ENCODE measurements at regions of chr15 and their contacts with region 1.

Region 1: DNA sequence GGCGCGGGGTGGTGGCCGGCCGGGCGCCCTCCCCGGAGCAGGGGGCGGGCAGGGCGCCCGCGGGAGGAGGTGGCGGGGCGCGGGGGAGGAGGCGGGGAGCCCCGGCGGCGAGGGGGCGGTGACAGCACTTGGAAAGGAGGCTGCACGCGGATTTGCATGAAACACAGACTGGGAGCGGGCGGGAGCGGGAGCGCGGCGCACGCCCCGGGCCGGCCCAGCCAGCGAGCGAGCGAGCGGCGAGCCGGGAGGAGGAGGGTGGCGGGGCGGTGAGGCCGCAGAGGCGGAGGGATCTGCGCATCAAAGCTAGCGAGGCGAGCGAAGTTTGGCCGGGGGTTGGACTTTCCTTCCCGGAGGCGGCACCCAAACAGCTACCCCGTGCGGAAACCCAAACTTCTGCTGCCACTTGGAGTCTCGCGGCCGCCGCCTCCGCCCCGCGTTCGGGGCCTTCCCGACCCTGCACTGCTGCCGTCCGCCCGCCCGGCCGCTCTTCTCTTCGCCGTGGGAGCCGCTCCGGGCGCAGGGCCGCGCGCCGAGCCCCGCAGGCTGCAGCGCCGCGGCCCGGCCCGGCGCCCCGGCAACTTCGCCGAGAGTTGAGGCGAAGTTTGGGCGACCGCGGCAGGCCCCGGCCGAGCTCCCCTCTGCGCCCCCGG is at the start of gene SMAD3:
- DNase-seq: peak; percentile 93 to 98
- ATAC-seq: peak; percentile 80 to 81
- H3K4me3 ChIP-seq: peak within 1 kb of the TSS; percentile 95
- H3K27ac ChIP-seq: peak within 1 kb of the TSS; percentile 89 to 96
- H3K4me1 ChIP-seq: peaks cover 52% of the 10 kb centered on the region
- CTCF ChIP-seq: peak; percentile 31; the same call in 2 of the 3 replicates
- EP300 ChIP-seq: no peak; a peak in 1 of 5 replicates
- POLR2A ChIP-seq: peak; percentile 75
- RAD21 ChIP-seq: peak; percentile 27 to 58; a peak in 2 of 5 replicates
- polyA plus RNA-seq, gene SMAD3: 77.2 and 101 TPM in 2 replicates

Region 2: DNA sequence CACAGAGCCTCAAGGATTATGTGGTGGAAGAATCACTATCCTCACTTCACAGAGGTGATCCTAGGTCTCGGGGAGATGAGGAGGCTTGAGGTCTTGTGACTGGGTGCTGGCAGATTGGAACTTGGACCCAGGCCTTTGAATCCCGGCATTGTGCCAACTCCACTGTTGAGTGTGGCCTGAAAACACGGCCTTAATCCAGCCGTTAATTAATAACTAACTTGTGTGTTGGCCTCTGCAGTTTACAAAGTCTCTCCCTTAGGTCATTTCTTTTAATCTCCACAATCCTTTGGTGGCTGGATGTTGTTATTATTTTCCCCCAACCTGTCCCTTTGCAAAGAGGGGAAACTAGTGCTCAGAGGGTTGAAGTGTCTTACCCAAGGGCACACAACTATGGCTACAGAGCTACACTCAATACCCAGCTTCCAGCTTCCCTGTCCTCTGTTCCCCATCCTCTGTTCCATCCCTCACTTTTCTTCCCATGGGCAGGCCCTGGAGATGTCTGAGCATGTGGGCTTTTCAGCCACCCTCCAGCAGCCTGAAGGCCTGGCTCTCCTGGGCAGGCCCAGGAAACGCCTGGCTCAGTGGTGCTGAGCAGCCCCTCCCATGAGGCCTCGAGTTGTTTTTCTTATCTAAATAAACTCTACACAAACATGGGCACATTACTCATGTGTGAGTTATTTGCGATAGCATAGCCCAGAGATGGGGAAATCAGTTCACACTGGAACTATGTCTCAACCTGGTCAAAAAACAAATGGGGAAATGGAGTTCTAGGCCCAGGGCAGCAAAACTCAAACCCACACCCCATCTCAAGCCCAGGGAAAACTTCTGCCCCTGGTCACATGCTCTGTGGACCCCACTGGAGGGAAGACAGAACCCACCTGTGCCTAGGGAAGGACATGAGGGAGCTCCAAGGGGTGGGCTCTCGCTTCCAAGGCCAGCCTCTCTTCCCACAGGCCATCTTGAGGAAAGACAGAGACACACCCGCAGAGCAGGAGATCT is 17.0 kb before region 1 on chr15:
- CTCF ChIA-PET with region 1: interaction called, 14 read pairs
- POLR2A ChIA-PET with region 1: interaction called, 9 read pairs
- DNase-seq: peak; percentile 87 to 98
- ATAC-seq: peak; percentile 78 to 87
- H3K4me3 ChIP-seq: peak overlapping the region; percentile 14; the same call in 1 of the 3 replicates
- H3K27ac ChIP-seq: peak overlapping the region; percentile 96 to 98
- H3K4me1 ChIP-seq: peaks cover 67% of the 10 kb centered on the region
- CTCF ChIP-seq: no peak
- EP300 ChIP-seq: peak; percentile 79 to 87; a peak in 3 of 5 replicates
- POLR2A ChIP-seq: peak; percentile 31; the same call in 1 of the 2 replicates
- RAD21 ChIP-seq: peak; percentile 40 to 52

Region 3: GRCh38 chr15:67080900-67081431 is 15.4 kb after region 1 on chr15:
- CTCF ChIA-PET with region 1: interaction called, 14 read pairs
- POLR2A ChIA-PET with region 1: interaction called, 4 read pairs
- DNase-seq: peak in 1 of 2 experiments; percentile 71
- ATAC-seq: peak in 1 of 2 experiments; percentile 7; a peak in 2 of 6 replicates
- H3K4me3 ChIP-seq: no peak overlapping the region
- H3K27ac ChIP-seq: peak overlapping the region in 1 of 2 experiments; percentile 62; a peak in 4 of 6 replicates
- H3K4me1 ChIP-seq: peaks cover 99% of the 10 kb centered on the region
- CTCF ChIP-seq: peak; percentile 31; the same call in 2 of the 3 replicates
- EP300 ChIP-seq: no peak
- POLR2A ChIP-seq: no peak
- RAD21 ChIP-seq: peak in 1 of 2 experiments; percentile 32; a peak in 3 of 5 replicates

Region 4: DNA sequence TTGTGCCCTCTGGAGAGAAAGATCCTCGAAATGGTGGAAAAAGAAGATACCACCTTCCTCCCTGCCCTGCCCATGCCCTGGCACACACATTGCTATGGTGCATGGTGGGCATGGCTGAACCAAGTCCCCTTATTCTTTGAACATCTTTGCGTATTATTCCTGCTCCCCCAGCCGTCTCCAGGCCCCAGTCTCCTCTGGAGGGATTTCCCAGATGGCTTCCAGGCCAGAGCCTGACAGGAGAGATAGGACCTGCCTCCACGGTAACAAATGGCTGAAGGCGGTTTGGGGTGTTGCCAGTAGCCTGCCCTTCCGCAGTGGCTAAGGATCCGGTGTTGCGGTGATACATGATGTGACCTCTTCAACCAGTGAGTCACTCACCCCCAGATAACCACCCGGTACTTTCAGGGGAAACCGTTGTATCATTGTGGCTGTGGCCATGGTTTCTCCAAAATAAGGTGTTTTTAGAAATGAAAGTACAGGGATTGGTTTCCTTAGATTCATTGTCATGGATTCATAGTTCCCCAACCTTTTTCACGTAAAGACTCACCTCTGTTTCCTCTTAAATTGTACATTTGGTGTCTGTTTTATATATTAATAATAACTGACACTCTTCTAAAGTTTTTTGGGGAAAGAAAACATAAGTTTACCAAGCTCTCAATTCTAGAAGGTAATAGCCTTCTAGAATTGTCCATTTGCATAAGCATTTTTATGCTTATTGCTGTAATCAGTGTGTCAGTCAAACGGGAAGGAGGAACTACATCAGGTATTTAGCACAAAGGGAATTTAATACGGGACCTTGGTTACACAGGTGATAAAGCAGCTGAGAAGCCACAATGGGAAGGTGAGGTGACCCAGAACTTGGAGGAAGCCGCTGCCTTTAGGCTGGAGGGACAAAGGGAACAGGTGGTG is 25.8 kb after region 1 on chr15:
- CTCF ChIA-PET with region 1: interaction called, 17 read pairs
- POLR2A ChIA-PET with region 1: interaction called, 4 read pairs
- DNase-seq: peak; percentile 85 to 89
- ATAC-seq: peak; percentile 65 to 69
- H3K4me3 ChIP-seq: peak overlapping the region; percentile 0; the same call in 1 of the 3 replicates
- H3K27ac ChIP-seq: peak overlapping the region; percentile 68 to 82
- H3K4me1 ChIP-seq: peaks cover 98% of the 10 kb centered on the region
- CTCF ChIP-seq: no peak
- EP300 ChIP-seq: peak in 1 of 2 experiments; percentile 45; a peak in 1 of 5 replicates
- POLR2A ChIP-seq: no peak
- RAD21 ChIP-seq: peak; percentile 15 to 24; a peak in 1 of 5 replicates

Region 5: GRCh38 chr15:67168694-67169093 is 103.1 kb after region 1 on chr15:
- CTCF ChIA-PET with region 1: no interaction called
- POLR2A ChIA-PET with region 1: no interaction called
- DNase-seq: no peak
- ATAC-seq: no peak
- H3K4me3 ChIP-seq: no peak overlapping the region
- H3K27ac ChIP-seq: peak overlapping the region in 1 of 2 experiments; percentile 79; a peak in 3 of 6 replicates
- H3K4me1 ChIP-seq: peaks cover 91% of the 10 kb centered on the region
- CTCF ChIP-seq: no peak
- EP300 ChIP-seq: no peak
- POLR2A ChIP-seq: no peak
- RAD21 ChIP-seq: no peak

Region 6: GRCh38 chr15:67201136-67201535 is 135.6 kb after region 1 on chr15:
- CTCF ChIA-PET with region 1: no interaction called
- POLR2A ChIA-PET with region 1: no interaction called
- DNase-seq: no peak
- ATAC-seq: no peak
- H3K4me3 ChIP-seq: no peak overlapping the region
- H3K27ac ChIP-seq: no peak overlapping the region
- H3K4me1 ChIP-seq: peaks cover 11% of the 10 kb centered on the region
- CTCF ChIP-seq: no peak
- EP300 ChIP-seq: no peak
- POLR2A ChIP-seq: no peak
- RAD21 ChIP-seq: no peak

Region 7: DNA sequence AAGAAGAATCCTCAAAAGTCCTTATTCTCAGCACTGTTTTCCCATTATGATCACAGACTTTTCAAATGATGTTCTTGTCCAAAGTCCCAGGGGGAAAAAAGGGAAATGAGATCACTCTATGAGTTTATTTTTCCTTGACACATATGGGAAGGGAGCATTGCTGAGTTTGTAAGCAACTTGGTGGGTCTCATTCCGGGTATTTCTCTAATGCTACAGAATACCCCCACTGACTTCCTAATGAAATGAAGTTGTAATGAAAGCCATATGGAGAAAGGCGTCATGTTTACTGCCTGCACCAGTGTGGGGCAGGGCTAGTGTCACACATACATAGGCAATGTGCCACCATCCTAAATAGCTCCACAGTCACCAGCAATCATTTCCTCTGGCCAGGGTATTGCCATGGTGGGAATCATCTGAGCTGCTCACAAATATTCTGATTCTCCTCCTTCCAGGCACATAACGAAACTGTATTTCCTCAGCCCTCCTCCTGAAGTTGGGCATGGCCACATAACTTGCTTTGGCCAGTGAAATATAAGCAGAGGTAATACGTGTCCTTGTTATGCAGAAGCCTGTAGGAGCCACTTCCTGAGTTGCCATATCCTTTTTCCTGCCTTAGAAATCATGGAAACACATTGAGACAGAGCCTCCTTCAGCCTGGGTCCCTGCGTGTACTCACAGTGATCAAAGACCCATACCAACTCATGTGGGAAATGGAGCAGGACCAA is 414.4 kb after region 1 on chr15:
- CTCF ChIA-PET with region 1: no interaction called
- POLR2A ChIA-PET with region 1: no interaction called
- DNase-seq: no peak
- ATAC-seq: no peak
- H3K4me3 ChIP-seq: no peak overlapping the region
- H3K27ac ChIP-seq: no peak overlapping the region
- H3K4me1 ChIP-seq: no peaks in the 10 kb centered on the region
- CTCF ChIP-seq: no peak
- EP300 ChIP-seq: no peak
- POLR2A ChIP-seq: no peak
- RAD21 ChIP-seq: no peak

Region 8: GRCh38 chr15:68154923-68155559 is 1089.5 kb after region 1 on chr15:
- CTCF ChIA-PET with region 1: no interaction called
- POLR2A ChIA-PET with region 1: no interaction called
- DNase-seq: peak; percentile 39 to 77
- ATAC-seq: peak; percentile 81 to 89; a peak in 5 of 6 replicates
- H3K4me3 ChIP-seq: no peak overlapping the region
- H3K27ac ChIP-seq: no peak overlapping the region; a peak in 1 of 6 replicates
- H3K4me1 ChIP-seq: peaks cover 4% of the 10 kb centered on the region; the same call in 1 of the 3 replicates
- CTCF ChIP-seq: peak; percentile 99
- EP300 ChIP-seq: no peak
- POLR2A ChIP-seq: no peak
- RAD21 ChIP-seq: peak; percentile 96 to 97